Lower leg skin (tissue), 4 donors: ENCODE measurements at regions of chr12 and their contacts with region 1.

Region 1: GRCh38 chr12:107884769-107885694 is 110.5 kb downstream of the ASCL4 start:
- DNase-seq: peak in 1 of 2 donors; percentile 32
- H3K4me3 ChIP-seq: no peak overlapping the region
- CTCF ChIP-seq: no peak
- POLR2A ChIP-seq: no peak

Region 2: DNA sequence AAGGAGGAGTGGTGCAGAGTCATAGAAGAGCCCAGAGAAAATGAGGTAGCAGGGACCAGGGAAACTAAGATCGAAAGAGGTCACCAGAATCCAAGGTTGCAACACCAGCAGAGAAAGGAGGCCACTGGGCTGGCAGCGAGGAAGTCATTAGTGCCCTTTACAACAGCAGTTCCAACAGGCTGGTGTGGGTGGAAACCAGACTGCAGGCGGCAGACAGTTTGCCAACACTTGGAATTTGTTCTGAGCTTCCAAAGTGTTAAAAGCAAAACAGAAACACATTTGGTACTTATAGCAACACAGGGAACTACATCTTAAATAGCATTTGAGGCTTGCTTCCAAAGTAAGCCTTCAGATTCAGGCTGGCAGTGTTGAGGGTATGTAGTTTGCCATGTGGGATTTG is 294.6 kb before region 1 on chr12:
- intact Hi-C with region 1: no loop called
- DNase-seq: no peak
- H3K4me3 ChIP-seq: no peak overlapping the region
- CTCF ChIP-seq: no peak
- POLR2A ChIP-seq: no peak

Region 3: GRCh38 chr12:107670999-107671643 is 213.9 kb before region 1 on chr12:
- intact Hi-C with region 1: loop called (anchors 10 kb)
- DNase-seq: no peak
- H3K4me3 ChIP-seq: no peak overlapping the region
- CTCF ChIP-seq: no peak
- POLR2A ChIP-seq: no peak

Region 4: GRCh38 chr12:108099073-108099472 is 214.0 kb after region 1 on chr12:
- intact Hi-C with region 1: no loop called
- DNase-seq: no peak
- H3K4me3 ChIP-seq: no peak overlapping the region
- CTCF ChIP-seq: no peak
- POLR2A ChIP-seq: no peak